Transverse colon (tissue), 4 donors: ENCODE measurements at regions of chr18 and their contacts with region 1.

Region 1: GRCh38 chr18:60331890-60332289 is 40.7 kb downstream of the MC4R start:
- DNase-seq: no peak
- H3K4me3 ChIP-seq: no peak overlapping the region
- H3K27ac ChIP-seq: no peak overlapping the region
- H3K4me1 ChIP-seq: no peaks in the 10 kb centered on the region
- H3K27me3 ChIP-seq: no peaks in the 10 kb centered on the region
- CTCF ChIP-seq: no peak
- EP300 ChIP-seq: no peak
- POLR2A ChIP-seq: no peak

Region 2: DNA sequence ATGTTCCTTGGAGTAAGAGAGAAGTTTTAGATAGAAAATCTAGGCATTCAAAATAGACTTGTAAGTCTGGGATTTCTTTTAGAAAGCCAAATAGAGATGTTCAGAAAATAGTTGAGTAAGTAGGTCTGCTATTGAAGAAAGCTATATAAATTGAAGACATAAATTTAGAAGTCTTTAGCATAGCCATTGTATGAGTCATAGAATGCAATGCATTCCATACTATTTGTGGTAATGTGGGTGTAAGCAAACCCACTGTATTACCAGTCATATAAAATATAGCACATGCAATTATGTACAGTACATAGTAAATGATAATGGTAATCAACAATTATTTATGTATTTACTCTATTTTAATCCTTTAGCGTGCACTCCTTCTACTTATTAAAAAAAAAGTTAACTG is 26.6 kb after region 1 on chr18:
- in situ Hi-C with region 1: no loop called
- intact Hi-C with region 1: no loop called
- DNase-seq: no peak
- H3K4me3 ChIP-seq: no peak overlapping the region
- H3K27ac ChIP-seq: no peak overlapping the region
- H3K4me1 ChIP-seq: no peaks in the 10 kb centered on the region
- H3K27me3 ChIP-seq: no peaks in the 10 kb centered on the region
- CTCF ChIP-seq: no peak
- EP300 ChIP-seq: no peak
- POLR2A ChIP-seq: no peak

Region 3: DNA sequence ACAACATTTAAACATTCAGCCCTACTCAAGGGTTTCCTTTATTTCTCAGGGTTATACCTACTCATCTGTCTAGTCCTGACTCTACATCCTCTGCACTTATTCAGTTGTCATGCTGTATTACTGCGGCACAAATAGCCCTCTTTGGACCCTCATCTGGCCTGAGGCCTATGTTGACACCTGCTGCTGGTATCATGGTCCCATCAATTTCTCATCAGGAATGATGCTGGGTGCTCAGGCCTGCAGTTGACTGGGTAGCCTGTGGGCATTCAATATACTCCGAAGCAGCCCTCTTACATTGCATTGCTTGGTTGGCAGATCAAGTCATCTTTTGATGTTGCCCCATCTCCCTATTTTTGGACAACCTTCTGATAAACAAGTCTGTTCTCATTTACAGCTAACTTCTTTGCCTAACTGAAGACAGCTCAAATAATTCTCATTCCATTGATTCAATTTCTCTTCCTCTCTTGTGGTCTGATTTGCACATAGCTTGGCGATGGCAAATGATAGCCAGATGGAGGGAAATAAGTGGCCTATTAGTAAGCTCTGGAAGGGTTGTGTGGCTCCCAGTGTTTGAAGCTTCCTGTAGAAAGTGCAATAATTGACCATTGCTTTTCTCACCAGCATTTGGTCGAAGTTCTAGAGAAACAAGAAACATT is 59.8 kb after region 1 on chr18:
- in situ Hi-C with region 1: loop called in 1 of 4 experiments (anchors 10 kb)
- intact Hi-C with region 1: no loop called
- DNase-seq: no peak
- H3K4me3 ChIP-seq: no peak overlapping the region
- H3K27ac ChIP-seq: no peak overlapping the region
- H3K4me1 ChIP-seq: no peaks in the 10 kb centered on the region
- H3K27me3 ChIP-seq: no peaks in the 10 kb centered on the region
- CTCF ChIP-seq: no peak
- EP300 ChIP-seq: no peak
- POLR2A ChIP-seq: no peak